ENCODE measurements at regions of chr17 and their contacts with region 1.

Region 1: GRCh38 chr17:5111402-5112204 is at the start of gene ZNF232:
- DNase-seq: peak; percentile 95
- H3K4me3 Mint-ChIP-seq: peak within 1 kb of the TSS; percentile 89
- H3K27ac Mint-ChIP-seq: peak within 1 kb of the TSS; percentile 81
- H3K4me1 Mint-ChIP-seq: peaks cover 27% of the 10 kb centered on the region
- H3K27me3 Mint-ChIP-seq: peaks cover 16% of the 10 kb centered on the region
- total RNA-seq, gene ZNF232: 9.1 to 9.5 TPM

Region 2: GRCh38 chr17:4997302-4998026 is 114.1 kb before region 1 on chr17 and contains the starts of genes INCA1 and KIF1C:
- CTCF ChIA-PET with region 1: no interaction called
- intact Hi-C with region 1: loop called (anchors 5 kb)
- DNase-seq: peak; percentile 93
- H3K4me3 Mint-ChIP-seq: peak within 1 kb of the TSS; percentile 83
- H3K27ac Mint-ChIP-seq: peak within 1 kb of the TSS; percentile 53
- H3K4me1 Mint-ChIP-seq: peaks cover 18% of the 10 kb centered on the region
- H3K27me3 Mint-ChIP-seq: no peaks in the 10 kb centered on the region
- total RNA-seq, gene INCA1: 0.21 to 0.54 TPM
- total RNA-seq, gene KIF1C: 30.5 to 31.1 TPM

Region 3: GRCh38 chr17:5078106-5079028 is 33.2 kb before region 1 on chr17 and contains the start of gene ZFP3:
- CTCF ChIA-PET with region 1: interaction called, 3 read pairs
- intact Hi-C with region 1: loop called (anchors 2 kb)
- DNase-seq: peak; percentile 80
- H3K4me3 Mint-ChIP-seq: peak within 1 kb of the TSS; percentile 89
- H3K27ac Mint-ChIP-seq: peak within 1 kb of the TSS; percentile 85
- H3K4me1 Mint-ChIP-seq: peaks cover 22% of the 10 kb centered on the region
- H3K27me3 Mint-ChIP-seq: no peaks in the 10 kb centered on the region
- total RNA-seq, gene ZFP3: 0.62 to 0.83 TPM

Measured in activated naive CD4-positive, alpha-beta T cell treated with anti-CD3 and anti-CD28 coated beads for 36 hours (primary cell).